CD4-positive, alpha-beta memory T cell (primary cell): ENCODE measurements at regions of chr15 and their contacts with region 1.

Region 1: DNA sequence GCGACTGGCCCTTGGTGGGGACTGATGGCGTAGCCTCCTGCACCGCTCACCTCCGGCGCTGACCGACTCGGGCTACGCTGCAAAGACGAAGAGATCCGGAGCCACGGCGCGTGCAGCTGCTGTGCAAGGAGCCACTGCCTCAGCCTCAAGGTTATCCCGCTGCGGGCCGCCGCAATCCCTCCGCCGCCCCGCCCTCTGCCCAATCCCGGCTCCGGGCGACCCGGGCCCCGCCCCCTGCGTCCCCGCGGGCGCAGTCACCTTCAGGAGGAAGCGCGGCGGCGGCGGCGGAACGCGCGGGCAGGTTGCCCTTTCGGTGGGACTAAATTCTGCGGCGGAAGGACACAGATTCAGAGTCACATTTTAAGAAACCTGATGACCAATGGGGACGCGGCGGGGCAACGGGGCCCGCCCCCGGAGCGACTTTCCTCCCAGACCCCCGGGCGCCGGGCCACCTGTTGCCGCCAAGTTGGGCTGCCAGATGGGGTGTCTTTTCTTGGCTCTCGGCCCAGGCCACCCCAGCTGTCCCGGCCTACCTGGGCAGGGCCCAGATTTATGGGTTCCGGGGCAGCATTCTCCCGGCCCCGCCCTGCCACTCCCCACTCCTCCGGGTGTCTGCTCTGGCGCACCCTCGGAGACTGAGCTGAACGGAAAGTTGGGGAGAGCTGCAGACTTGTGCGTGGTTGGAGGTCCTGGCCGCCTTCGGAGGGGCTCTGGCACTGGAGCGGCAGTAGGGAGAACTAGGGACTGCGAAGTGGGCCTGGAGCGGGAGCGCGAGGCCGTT is at the start of gene PKM:
- DNase-seq: peak; percentile 88 to 90 (median 89)
- H3K4me3 ChIP-seq: peak within 1 kb of the TSS; percentile 68 to 92
- H3K4me3 Mint-ChIP-seq: peak within 1 kb of the TSS; percentile 95 to 99 (median 98)
- H3K27ac ChIP-seq: peak within 1 kb of the TSS; percentile 96
- H3K27ac Mint-ChIP-seq: peak within 1 kb of the TSS; percentile 94 to 100 (median 97)
- H3K4me1 ChIP-seq: peaks cover 42% of the 10 kb centered on the region
- H3K4me1 Mint-ChIP-seq: peaks cover 35 to 70% (median 50%) of the 10 kb centered on the region in 4 donors
- H3K27me3 ChIP-seq: no peaks in the 10 kb centered on the region
- H3K27me3 Mint-ChIP-seq: peaks cover 0 to 4% of the 10 kb centered on the region in 2 donors
- total RNA-seq, gene PKM: 378 to 383 TPM

Region 2: GRCh38 chr15:72117486-72118399 is 113.5 kb before region 1 on chr15 and contains the start of gene MYO9A:
- CTCF ChIA-PET with region 1: no interaction called
- POLR2A ChIA-PET with region 1: interaction called, 6 read pairs
- intact Hi-C with region 1: loop called (anchors 1 kb)
- DNase-seq: peak; percentile 97 to 98 (median 98)
- H3K4me3 ChIP-seq: peak within 1 kb of the TSS; percentile 89
- H3K4me3 Mint-ChIP-seq: peak within 1 kb of the TSS; percentile 93 to 100 (median 98)
- H3K27ac ChIP-seq: peak within 1 kb of the TSS; percentile 94
- H3K27ac Mint-ChIP-seq: peak within 1 kb of the TSS; percentile 96 to 99 (median 99)
- H3K4me1 ChIP-seq: peaks cover 23% of the 10 kb centered on the region
- H3K4me1 Mint-ChIP-seq: peaks cover 27 to 60% (median 41%) of the 10 kb centered on the region in 4 donors
- H3K27me3 ChIP-seq: no peaks in the 10 kb centered on the region
- H3K27me3 Mint-ChIP-seq: no peaks in the 10 kb centered on the region
- total RNA-seq, gene MYO9A: 37.9 to 44.0 TPM

Region 3: GRCh38 chr15:72206677-72207000 is 24.6 kb before region 1 on chr15:
- CTCF ChIA-PET with region 1: interaction called, 53 read pairs
- POLR2A ChIA-PET with region 1: interaction called, 6 read pairs
- intact Hi-C with region 1: no loop called
- DNase-seq: no peak
- H3K4me3 ChIP-seq: no peak overlapping the region
- H3K4me3 Mint-ChIP-seq: no peak overlapping the region
- H3K27ac ChIP-seq: no peak overlapping the region
- H3K27ac Mint-ChIP-seq: peak overlapping the region in 2 of 7 donors; percentile 36 to 50
- H3K4me1 ChIP-seq: no peaks in the 10 kb centered on the region
- H3K4me1 Mint-ChIP-seq: peaks cover 0 to 3% (median under 1%) of the 10 kb centered on the region in 4 donors
- H3K27me3 ChIP-seq: no peaks in the 10 kb centered on the region
- H3K27me3 Mint-ChIP-seq: no peaks in the 10 kb centered on the region

Region 4: GRCh38 chr15:72217216-72217615 is 14.0 kb before region 1 on chr15:
- CTCF ChIA-PET with region 1: interaction called, 21 read pairs
- POLR2A ChIA-PET with region 1: interaction called, 18 read pairs
- intact Hi-C with region 1: no loop called
- DNase-seq: no peak
- H3K4me3 ChIP-seq: no peak overlapping the region
- H3K4me3 Mint-ChIP-seq: no peak overlapping the region
- H3K27ac ChIP-seq: no peak overlapping the region
- H3K27ac Mint-ChIP-seq: peak overlapping the region in 3 of 7 donors; percentile 11 to 80 (median 46)
- H3K4me1 ChIP-seq: peaks cover 28% of the 10 kb centered on the region
- H3K4me1 Mint-ChIP-seq: peaks cover 16 to 37% (median 28%) of the 10 kb centered on the region in 4 donors
- H3K27me3 ChIP-seq: no peaks in the 10 kb centered on the region
- H3K27me3 Mint-ChIP-seq: no peaks in the 10 kb centered on the region

Region 5: DNA sequence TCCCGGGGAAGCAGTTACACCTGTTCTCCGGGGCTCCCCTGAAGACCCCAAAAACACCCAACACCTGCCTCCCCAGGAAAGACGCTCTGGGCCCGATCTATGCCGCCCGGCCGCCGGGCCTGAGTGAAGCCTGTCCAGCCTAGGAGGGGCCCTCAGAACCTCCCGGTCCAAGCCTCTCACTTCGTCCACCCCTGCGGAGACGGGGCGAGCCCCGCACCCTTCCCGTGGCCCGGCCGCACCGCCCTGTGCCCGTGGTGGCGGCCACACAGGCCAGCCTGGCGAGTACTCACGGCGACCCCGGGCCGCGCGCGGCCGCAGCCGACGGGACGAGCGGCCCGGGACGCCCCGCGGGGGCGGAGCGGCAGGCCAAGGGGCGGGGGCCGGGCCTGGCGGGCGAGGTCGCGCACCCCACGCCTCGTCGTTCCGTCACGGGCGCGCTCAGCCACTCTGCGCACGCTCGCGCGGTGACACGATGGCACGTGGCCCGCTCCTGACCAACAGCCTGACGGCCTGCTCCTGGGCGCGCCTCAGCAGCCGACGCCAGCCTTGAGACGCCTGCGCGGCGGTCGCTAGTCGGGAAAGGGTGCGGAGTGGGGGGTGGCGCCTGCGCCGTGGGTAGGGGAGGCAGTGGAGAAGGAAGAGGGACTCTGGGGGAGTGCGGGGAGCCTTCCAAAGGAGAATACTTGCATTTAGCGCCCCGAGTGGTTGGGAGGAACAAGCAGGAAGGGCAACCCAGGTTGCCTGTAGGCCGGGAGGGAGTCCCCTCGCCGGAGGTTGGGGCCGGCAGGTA is 41.2 kb after region 1 on chr15 and contains the start of gene PARP6:
- CTCF ChIA-PET with region 1: interaction called, 36 read pairs
- POLR2A ChIA-PET with region 1: interaction called, 39 read pairs
- intact Hi-C with region 1: loop called (anchors 1 kb)
- DNase-seq: peak; percentile 98 to 100 (median 100)
- H3K4me3 ChIP-seq: peak within 1 kb of the TSS; percentile 26 to 65
- H3K4me3 Mint-ChIP-seq: peak within 1 kb of the TSS; percentile 85 to 93 (median 88)
- H3K27ac ChIP-seq: peak within 1 kb of the TSS; percentile 87
- H3K27ac Mint-ChIP-seq: peak within 1 kb of the TSS; percentile 93 to 97 (median 95)
- H3K4me1 ChIP-seq: peaks cover 34% of the 10 kb centered on the region
- H3K4me1 Mint-ChIP-seq: peaks cover 27 to 43% (median 36%) of the 10 kb centered on the region in 4 donors
- H3K27me3 ChIP-seq: no peaks in the 10 kb centered on the region
- H3K27me3 Mint-ChIP-seq: no peaks in the 10 kb centered on the region
- total RNA-seq, gene PARP6: 111 TPM

Region 6: GRCh38 chr15:72285927-72286516 is 54.8 kb after region 1 on chr15:
- CTCF ChIA-PET with region 1: interaction called, 26 read pairs
- POLR2A ChIA-PET with region 1: interaction called, 3 read pairs
- intact Hi-C with region 1: no loop called
- DNase-seq: peak in 4 of 5 donors; percentile 38 to 46 (median 42)
- H3K4me3 ChIP-seq: no peak overlapping the region
- H3K4me3 Mint-ChIP-seq: no peak overlapping the region
- H3K27ac ChIP-seq: no peak overlapping the region
- H3K27ac Mint-ChIP-seq: no peak overlapping the region
- H3K4me1 ChIP-seq: no peaks in the 10 kb centered on the region
- H3K4me1 Mint-ChIP-seq: no peaks in the 10 kb centered on the region
- H3K27me3 ChIP-seq: no peaks in the 10 kb centered on the region
- H3K27me3 Mint-ChIP-seq: no peaks in the 10 kb centered on the region